ENCODE measurements at regions of chr12 and their contacts with region 1.

Region 1: DNA sequence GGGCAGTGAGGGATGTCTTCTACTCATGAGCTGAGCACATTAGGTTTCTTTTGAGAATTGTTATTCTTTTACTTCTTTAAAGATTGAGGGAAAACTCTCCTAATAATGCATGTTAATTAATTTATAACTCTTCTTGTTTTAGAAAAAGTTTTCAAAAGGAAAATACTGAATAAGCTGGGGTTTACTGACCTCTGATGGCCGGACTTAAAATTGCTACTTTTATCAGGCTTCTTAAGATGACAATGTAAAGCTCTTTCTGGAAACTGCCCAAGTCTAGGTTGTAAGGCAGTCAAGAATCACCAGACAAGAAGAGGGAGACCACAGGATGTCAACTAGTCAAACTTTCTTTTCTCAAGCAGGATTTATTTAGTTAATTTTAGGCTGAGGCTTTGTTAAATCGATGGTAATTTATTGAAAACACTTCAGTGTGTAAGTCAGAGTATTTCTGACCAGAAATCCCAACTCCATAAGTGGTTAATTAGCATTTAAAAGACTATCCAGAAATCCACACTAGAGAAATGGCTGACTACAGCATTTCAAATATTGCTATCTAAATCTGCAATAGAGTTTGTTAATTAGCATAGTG is 82.1 kb downstream of the AVPR1A start:
- DNase-seq: peak; percentile 56
- H3K4me3 ChIP-seq: no peak overlapping the region
- CTCF ChIP-seq: peak; percentile 36

Region 2: GRCh38 chr12:62435303-62436163 is 633.4 kb before region 1 on chr12:
- CTCF ChIA-PET with region 1: interaction called, 43 read pairs
- POLR2A ChIA-PET with region 1: no interaction called
- DNase-seq: no peak
- H3K4me3 ChIP-seq: peak overlapping the region; percentile 62
- CTCF ChIP-seq: peak; percentile 74

Region 3: GRCh38 chr12:62813031-62813829 is 255.7 kb before region 1 on chr12:
- CTCF ChIA-PET with region 1: interaction called, 180 read pairs
- POLR2A ChIA-PET with region 1: no interaction called
- DNase-seq: no peak
- H3K4me3 ChIP-seq: peak overlapping the region; percentile 21; the same call in 1 of the 2 replicates
- CTCF ChIP-seq: peak; percentile 76

Region 4: DNA sequence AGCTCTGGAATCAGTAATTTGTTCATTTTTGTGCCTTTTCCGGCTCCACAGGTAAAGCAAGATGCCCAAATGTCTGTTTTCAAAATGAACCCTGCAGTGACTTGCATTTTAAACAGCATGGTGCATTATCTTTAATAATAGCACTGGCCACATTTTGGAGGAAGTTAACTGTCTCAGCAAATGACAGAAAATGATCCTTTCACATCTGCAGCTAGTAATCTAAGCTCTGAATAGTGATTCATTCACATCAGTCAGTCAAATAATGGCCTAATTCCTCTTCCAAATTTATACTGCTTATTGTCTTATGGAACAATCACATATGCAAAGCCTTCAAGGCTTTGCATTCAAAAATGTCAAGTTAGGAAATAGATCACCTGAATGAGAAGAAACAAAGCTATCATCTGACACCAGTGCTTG is 209.6 kb before region 1 on chr12:
- CTCF ChIA-PET with region 1: interaction called, 13 read pairs
- POLR2A ChIA-PET with region 1: no interaction called
- DNase-seq: no peak
- H3K4me3 ChIP-seq: no peak overlapping the region
- CTCF ChIP-seq: no peak

Region 5: DNA sequence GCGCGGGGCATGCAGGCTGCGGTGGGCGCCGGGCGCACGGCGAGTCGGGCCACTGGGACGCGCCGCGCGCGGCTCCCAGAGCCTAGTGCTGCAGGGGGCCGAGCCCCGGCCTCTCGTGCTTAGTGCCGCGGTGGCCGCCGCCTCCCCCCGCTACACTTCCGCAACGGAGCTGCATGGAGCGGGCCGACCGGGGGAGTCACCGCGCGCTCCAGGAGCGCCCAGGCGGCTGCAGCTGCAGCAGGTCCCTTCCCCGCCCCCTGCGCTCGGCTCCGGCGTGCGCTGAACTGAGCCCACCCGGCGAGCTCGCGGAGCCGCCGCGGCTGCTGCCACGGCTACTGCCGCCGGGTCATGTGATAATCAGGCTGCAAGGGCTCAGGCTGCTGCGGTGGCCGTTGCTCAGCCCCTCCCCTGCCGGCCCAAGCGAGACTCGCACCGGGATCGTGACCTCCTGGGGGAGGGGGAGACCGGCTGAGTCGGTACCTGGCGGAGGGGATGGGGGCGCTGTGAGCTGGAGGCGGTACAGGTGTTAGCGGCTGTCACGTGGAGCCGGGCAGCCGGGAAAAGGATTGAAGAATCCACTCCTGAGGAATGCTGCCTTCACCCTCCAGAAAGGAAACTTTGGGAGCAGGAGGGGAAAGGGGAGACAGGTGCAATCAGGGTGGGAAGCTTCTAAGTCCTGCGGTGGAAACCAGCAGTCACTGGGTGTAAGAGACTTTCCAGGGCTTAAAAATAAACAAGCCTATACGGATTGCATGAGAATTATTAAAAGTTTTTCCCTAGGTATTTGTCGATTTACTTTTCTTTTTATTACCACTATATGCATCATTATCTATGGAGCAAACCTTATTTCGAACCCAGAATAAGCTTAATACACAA is 133.9 kb before region 1 on chr12 and contains the start of gene PPM1H:
- CTCF ChIA-PET with region 1: interaction called, 36 read pairs
- POLR2A ChIA-PET with region 1: interaction called, 3 read pairs
- DNase-seq: no peak
- H3K4me3 ChIP-seq: peak within 1 kb of the TSS; percentile 71
- CTCF ChIP-seq: no peak

Region 6: DNA sequence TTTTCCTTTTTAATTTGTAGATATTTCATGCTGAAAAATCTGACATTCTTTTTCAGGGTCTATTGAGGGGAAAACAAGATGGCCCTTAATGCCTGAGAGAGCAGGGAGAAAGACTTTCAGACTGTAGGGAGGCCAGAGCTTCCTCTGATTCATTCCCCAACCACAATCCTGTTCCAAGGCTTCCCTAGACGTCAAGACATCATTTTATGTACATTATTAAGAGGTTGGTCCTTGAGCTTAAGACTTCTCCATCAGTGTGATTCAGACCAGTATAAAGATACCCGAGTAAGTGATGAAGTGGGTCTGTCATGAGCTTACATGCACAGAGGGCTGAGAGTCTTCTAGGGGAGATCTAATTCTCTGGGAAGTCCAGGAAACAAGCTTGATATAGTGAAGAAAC is 24.8 kb after region 1 on chr12:
- CTCF ChIA-PET with region 1: interaction called, 11 read pairs
- POLR2A ChIA-PET with region 1: no interaction called
- DNase-seq: no peak
- H3K4me3 ChIP-seq: no peak overlapping the region
- CTCF ChIP-seq: no peak

Measured in AG04449 (cell line).